Head of caudate nucleus (tissue), 42 donors: ENCODE measurements at regions of chr3 and their contacts with region 1.

Region 1: DNA sequence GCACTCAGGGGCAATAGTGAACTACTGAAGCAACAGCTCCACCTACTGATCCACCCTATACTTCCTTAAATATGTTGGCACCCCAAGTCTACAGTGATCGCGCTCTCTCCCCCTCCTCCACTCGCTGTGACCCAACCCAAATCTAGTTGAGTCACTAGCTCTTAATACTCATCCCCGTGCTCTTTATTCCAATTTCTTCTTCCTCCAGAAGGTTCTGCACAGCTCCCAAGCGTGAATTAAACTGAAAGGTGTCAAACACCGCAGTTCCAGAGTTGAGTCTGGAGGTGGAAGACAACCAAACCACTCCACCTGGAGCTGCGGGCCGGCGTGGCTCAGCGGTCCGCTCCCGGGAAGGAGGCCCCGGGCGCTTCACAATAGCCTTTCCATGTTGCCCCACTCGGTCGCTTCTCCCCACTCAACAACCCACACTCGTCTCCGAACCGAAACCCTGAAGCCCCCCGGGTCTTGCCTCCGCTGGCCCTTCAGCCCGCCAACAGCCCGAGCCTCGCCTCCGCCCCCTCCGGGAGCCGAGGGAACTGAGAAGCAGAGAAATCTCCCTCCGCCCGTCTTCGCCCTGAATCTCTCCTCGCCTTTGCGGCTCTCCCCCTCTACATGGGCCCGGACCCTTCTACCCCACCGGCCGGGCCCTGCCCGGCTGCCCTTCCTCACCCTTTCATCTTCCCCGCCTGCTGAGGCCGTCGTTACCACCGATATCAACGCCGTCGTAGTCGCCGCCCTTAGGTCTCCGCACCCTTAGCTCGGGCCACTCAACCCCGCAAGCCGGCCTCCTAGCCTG is 578 bp downstream of the NAA50 start:
- DNase-seq: peak; percentile 31 to 90 (median 66)

Region 2: GRCh38 chr3:113696658-113697499 is 48.6 kb before region 1 on chr3:
- intact Hi-C with region 1: loop called (anchors 2 kb)
- DNase-seq: peak; percentile 99 to 100 (median 100)

Region 3: DNA sequence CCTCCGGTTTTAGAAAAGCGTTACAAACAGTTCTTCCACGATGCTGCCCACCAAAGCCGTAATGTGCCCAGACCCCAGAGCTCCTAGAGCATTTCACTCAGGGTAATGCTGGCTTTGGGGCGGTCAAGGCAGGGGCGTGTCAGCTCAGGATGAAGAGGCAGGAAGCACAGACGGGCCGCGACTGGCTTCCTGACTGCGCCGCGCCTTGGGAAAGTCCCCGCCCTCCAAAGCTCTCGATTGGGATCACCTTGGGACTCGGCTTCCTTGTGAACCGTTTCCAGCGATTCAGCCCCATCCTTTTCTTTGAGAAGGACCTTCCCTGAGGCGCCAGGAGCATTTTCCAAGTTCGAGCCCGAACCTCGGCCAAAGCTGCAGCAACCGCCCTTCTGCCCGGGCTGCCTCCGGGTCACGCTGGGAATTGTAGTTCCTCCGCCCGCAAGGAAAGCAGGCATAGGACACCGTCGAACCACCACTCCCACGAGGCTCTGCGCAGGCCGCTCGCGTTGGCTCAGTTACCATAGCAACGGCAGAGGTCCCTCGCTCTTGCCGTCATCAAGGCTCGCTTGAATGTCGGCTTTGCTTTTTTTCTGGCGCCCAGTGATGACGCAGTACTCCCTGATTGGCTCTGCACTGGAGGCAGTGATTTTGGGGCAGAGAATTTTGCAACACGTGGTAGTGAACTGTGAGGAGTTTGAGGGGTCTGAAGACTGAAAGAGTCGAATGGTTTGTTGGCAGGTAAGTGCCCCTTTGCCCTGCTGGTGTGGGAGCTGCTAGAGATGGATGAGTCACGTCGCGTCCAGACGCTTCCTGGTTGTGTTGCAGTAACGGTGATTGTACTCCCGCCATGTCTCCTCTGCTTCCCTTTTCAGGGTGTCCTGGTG is 310.9 kb after region 1 on chr3 and contains the starts of genes CCDC191 and QTRT2:
- intact Hi-C with region 1: loop called (anchors 5 kb)
- DNase-seq: peak; percentile 98 to 100 (median 99)

Region 4: GRCh38 chr3:114299421-114299820 is 554.0 kb after region 1 on chr3:
- intact Hi-C with region 1: no loop called
- DNase-seq: peak in 16 of 42 donors; percentile 5 to 52 (median 18)